ENCODE measurements at regions of chr3 and their contacts with region 1.

Region 1: GRCh38 chr3:88203642-88204055 is 53.9 kb downstream of the C3orf38 start:
- DNase-seq: peak in 6 of 9 experiments; percentile 18 to 51 (median 42)
- ATAC-seq: no peak
- H3K4me3 ChIP-seq: no peak overlapping the region
- H3K4me3 Mint-ChIP-seq: no peak overlapping the region
- H3K27ac ChIP-seq: no peak overlapping the region
- H3K27ac Mint-ChIP-seq: no peak overlapping the region
- H3K4me1 ChIP-seq: no peaks in the 10 kb centered on the region
- H3K4me1 Mint-ChIP-seq: no peaks in the 10 kb centered on the region
- H3K27me3 ChIP-seq: no peaks in the 10 kb centered on the region
- H3K27me3 Mint-ChIP-seq: peaks cover 8% of the 10 kb centered on the region
- CTCF ChIP-seq: peak; percentile 53

Region 2: GRCh38 chr3:89067736-89068135 is 864.1 kb after region 1 on chr3:
- CTCF ChIA-PET with region 1: no interaction called
- POLR2A ChIA-PET with region 1: no interaction called
- intact Hi-C with region 1: no loop called
- DNase-seq: no peak
- ATAC-seq: no peak
- H3K4me3 ChIP-seq: no peak overlapping the region
- H3K4me3 Mint-ChIP-seq: no peak overlapping the region
- H3K27ac ChIP-seq: no peak overlapping the region
- H3K27ac Mint-ChIP-seq: no peak overlapping the region
- H3K4me1 ChIP-seq: no peaks in the 10 kb centered on the region
- H3K4me1 Mint-ChIP-seq: no peaks in the 10 kb centered on the region
- H3K27me3 ChIP-seq: no peaks in the 10 kb centered on the region
- H3K27me3 Mint-ChIP-seq: no peaks in the 10 kb centered on the region
- CTCF ChIP-seq: no peak

Region 3: GRCh38 chr3:90184861-90185260 is 1981.2 kb after region 1 on chr3:
- CTCF ChIA-PET with region 1: no interaction called
- POLR2A ChIA-PET with region 1: no interaction called
- intact Hi-C with region 1: loop called in 1 of 2 experiments (anchors 10 kb)
- DNase-seq: no peak
- ATAC-seq: no peak
- H3K4me3 ChIP-seq: no peak overlapping the region
- H3K4me3 Mint-ChIP-seq: no peak overlapping the region
- H3K27ac ChIP-seq: no peak overlapping the region
- H3K27ac Mint-ChIP-seq: no peak overlapping the region
- H3K4me1 ChIP-seq: no peaks in the 10 kb centered on the region
- H3K4me1 Mint-ChIP-seq: no peaks in the 10 kb centered on the region
- H3K27me3 ChIP-seq: no peaks in the 10 kb centered on the region
- H3K27me3 Mint-ChIP-seq: no peaks in the 10 kb centered on the region
- CTCF ChIP-seq: no peak